ENCODE measurements at regions of chr2 and their contacts with region 1.

Region 1: DNA sequence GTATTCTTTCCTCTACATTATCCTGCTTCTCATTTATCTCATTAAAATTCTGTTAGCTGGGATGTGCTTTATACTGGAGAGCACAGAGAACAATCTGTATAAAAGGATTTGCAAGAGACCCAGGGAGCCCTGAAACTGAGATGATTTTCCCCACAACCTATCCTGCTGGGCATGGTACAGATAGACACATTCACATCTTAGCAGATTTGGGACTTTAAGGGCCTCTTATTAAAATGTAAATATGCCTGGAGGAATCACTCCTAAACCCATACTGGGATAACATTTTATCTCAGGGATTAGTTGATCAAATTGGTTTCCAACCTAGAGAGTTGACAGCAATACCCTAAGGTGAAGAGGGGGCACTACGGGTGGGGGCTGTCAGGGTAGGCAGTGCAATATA is 45.5 kb downstream of the AOX1 start:
- DNase-seq: no peak
- H3K4me3 ChIP-seq: no peak overlapping the region
- H3K27ac ChIP-seq: no peak overlapping the region
- H3K4me1 ChIP-seq: no peaks in the 10 kb centered on the region
- H3K27me3 ChIP-seq: no peaks in the 10 kb centered on the region
- CTCF ChIP-seq: no peak
- POLR2A ChIP-seq: no peak

Region 2: DNA sequence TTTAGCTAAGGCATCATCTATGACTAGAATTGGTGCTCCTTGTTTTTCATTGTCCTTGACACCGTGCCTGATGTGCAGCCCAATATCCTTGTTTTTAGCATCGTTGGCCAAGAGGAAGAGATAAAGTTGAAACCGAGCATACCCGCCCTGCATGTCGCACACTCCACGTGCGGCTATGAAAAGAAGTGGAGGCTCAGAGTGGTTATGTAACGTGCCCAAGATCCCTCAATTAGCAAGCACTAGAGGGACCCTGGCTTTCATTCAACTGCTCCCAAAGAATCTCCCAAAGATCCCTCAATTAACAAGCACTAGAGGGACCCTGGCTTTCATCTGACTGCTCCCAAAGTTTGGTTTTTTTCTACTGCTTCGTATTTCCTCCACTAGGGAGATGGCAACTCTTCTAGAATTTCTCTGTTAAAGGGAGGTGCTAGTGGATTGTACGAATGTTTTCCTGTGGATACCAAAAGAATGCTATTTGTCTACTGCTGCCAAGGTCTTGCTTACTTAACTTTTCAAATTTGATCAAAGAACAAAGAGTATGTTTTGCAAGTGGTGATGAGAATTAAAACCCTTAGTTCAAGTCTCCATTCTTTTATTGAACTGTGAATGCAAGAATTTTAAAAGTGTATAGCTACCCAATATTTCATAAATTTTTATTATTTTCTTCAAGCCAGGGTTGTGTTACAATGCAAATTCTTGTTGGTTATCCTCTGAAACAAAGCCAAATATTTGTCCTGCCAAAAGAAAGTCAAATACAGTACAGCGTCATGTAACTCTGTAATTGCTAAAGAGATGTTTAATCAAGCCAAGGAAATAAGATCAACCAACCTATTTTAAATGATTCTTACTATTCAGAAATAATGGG is 46.7 kb after region 1 on chr2:
- intact Hi-C with region 1: loop called (anchors 2 kb)
- DNase-seq: no peak
- H3K4me3 ChIP-seq: no peak overlapping the region
- H3K27ac ChIP-seq: peak overlapping the region in 1 of 2 donors; percentile 56
- H3K4me1 ChIP-seq: peaks cover 4 to 20% of the 10 kb centered on the region in 2 donors
- H3K27me3 ChIP-seq: no peaks in the 10 kb centered on the region
- CTCF ChIP-seq: no peak
- POLR2A ChIP-seq: no peak

Region 3: DNA sequence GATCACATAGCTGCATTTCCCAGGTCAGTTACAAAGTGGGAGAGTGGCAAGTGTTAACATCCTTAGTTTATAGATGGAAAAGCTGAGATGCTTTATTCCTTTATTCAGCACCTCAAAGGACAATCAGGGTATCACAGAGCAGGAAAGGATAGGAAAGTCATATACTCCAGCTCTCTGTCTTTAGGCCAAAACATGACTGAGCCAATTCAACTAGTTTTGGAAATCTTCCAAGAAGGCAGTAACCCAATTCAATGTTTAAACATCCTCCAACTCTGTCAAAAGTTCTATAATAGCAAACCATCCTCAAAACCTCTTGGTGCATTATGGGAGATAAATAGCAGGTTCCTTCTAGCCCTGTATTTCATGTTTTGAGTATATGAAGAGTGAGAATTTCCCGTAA is 654.2 kb after region 1 on chr2:
- intact Hi-C with region 1: no loop called
- DNase-seq: no peak
- H3K4me3 ChIP-seq: no peak overlapping the region
- H3K27ac ChIP-seq: no peak overlapping the region
- H3K4me1 ChIP-seq: no peaks in the 10 kb centered on the region
- H3K27me3 ChIP-seq: no peaks in the 10 kb centered on the region
- CTCF ChIP-seq: no peak
- POLR2A ChIP-seq: no peak

Measured in breast epithelium (tissue), 4 donors.